Activated naive CD4-positive, alpha-beta T cell treated with anti-CD3 and anti-CD28 coated beads for 36 hours (primary cell): ENCODE measurements at regions of chr2 and their contacts with region 1.

Region 1: GRCh38 chr2:236569573-236569973 is at the start of gene ACKR3:
- DNase-seq: peak; percentile 78
- H3K4me3 Mint-ChIP-seq: peak within 1 kb of the TSS; percentile 63
- H3K27ac Mint-ChIP-seq: no peak within 1 kb of the TSS
- H3K4me1 Mint-ChIP-seq: peaks cover 13% of the 10 kb centered on the region
- H3K27me3 Mint-ChIP-seq: no peaks in the 10 kb centered on the region
- total RNA-seq, gene ACKR3: 0.45 to 0.49 TPM

Region 2: DNA sequence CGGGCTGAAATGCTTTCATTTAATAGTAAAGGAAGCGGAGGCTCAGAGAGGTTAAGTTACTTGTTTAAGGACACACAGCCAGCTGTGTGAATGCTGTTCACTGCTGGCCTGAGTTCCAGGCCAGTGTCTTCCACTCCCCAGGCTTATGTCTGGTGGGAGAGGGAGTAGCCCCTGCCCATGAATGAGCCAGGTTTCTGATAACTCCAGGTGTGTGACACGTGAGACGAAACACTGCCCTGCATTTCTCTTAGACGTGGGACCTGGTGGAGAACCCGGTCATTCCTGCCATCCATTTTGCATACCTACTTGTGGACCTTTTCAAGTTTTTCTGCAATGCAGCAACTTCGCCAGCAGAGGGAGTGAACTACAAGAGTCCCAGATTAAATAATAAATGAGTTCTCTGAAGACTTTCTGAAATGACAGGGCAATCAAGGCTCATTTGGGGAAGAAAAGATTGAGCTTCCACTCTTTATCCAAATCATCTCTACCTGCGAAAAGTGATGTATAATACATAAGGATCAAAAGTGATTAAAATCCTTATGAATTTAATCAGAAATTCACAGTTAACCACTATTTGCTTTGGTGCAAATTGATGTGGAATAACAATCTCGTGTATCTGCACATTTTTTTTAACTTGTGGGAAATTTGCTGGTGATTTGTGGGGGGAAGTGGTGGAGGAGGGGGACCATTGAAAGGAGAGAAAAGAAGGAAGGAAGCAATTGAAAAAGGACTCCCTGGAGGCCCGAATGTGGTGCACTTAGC is 226.0 kb before region 1 on chr2:
- CTCF ChIA-PET with region 1: interaction called, 15 read pairs
- intact Hi-C with region 1: no loop called
- DNase-seq: peak; percentile 70
- H3K4me3 Mint-ChIP-seq: no peak overlapping the region
- H3K27ac Mint-ChIP-seq: no peak overlapping the region
- H3K4me1 Mint-ChIP-seq: no peaks in the 10 kb centered on the region
- H3K27me3 Mint-ChIP-seq: no peaks in the 10 kb centered on the region

Region 3: DNA sequence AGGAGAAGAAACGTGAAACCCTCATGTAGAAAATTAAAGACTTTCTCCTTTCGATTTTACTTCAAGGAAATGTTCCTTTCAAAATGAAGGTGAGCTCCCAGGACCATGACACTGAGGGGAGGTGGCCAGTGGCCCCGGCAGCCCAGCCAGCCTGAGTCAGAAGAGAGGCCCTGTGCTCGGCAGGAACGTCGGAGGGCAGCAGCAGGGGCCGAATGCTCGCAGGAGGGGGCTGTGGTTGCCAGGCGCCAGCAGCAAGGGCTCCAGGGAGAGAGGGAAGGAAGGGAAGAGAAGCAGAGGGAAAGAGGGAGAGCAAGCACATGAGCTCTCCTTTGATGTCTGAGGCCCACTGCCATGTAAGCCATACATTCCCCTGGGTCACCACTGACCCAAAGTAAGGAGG is 73.2 kb before region 1 on chr2:
- CTCF ChIA-PET with region 1: no interaction called
- intact Hi-C with region 1: no loop called
- DNase-seq: no peak
- H3K4me3 Mint-ChIP-seq: no peak overlapping the region
- H3K27ac Mint-ChIP-seq: no peak overlapping the region
- H3K4me1 Mint-ChIP-seq: no peaks in the 10 kb centered on the region
- H3K27me3 Mint-ChIP-seq: peaks cover 5% of the 10 kb centered on the region

Region 4: GRCh38 chr2:236536727-236537398 is 32.7 kb before region 1 on chr2:
- CTCF ChIA-PET with region 1: interaction called, 21 read pairs
- intact Hi-C with region 1: loop called (anchors 1 kb)
- DNase-seq: peak; percentile 69
- H3K4me3 Mint-ChIP-seq: peak overlapping the region; percentile 86
- H3K27ac Mint-ChIP-seq: peak overlapping the region; percentile 91
- H3K4me1 Mint-ChIP-seq: peaks cover 51% of the 10 kb centered on the region
- H3K27me3 Mint-ChIP-seq: no peaks in the 10 kb centered on the region

Region 5: DNA sequence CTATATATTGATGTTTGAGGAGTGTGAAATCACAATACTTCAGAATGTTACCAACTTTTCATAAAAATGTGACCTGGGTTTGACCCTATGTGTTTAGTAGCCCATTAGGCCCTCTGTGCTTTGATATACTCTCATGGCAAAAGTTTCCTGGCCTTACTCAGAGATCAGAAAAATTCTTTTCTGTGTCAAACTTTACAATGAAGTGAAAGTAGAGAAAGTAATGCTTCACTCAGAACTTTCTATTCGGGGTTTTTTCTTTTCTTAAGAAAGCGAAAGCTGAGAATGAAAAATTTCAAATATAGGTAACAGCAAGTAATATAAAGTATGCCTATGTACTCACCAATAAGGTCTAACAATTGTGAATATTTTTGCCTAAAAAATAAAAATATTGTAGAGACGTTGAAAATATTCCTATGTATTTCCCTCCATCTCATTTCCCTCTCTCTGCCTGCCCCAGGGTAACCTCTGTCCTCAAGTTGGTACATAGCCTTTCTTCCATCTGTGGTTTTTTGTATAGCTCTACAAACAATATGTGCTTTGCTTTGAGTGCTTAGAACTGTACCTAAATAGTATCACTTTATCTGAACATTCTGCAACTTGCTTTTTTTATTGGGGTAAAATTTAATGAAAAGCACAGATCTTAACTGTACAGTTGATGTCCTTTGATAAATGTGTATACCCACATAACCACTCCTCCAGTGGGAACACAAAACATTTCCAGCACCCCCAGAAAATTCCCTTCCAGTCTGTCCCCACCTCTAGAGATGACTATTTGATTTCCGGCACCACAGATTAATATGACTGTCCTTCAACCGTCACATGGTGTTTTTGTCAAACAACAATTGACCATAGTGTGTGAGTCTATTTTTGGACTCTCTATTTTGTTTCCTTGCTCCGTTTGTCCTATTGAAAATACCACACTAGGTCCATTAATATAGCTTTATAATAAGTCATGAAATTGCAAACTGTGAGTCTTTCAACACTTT is 10.3 kb before region 1 on chr2:
- CTCF ChIA-PET with region 1: interaction called, 20 read pairs
- intact Hi-C with region 1: loop called (anchors 1 kb)
- DNase-seq: no peak
- H3K4me3 Mint-ChIP-seq: peak overlapping the region; percentile 28
- H3K27ac Mint-ChIP-seq: no peak overlapping the region
- H3K4me1 Mint-ChIP-seq: peaks cover 52% of the 10 kb centered on the region
- H3K27me3 Mint-ChIP-seq: no peaks in the 10 kb centered on the region

Region 6: GRCh38 chr2:237451643-237452469 is 882.3 kb after region 1 on chr2:
- CTCF ChIA-PET with region 1: no interaction called
- intact Hi-C with region 1: no loop called
- DNase-seq: no peak
- H3K4me3 Mint-ChIP-seq: no peak overlapping the region
- H3K27ac Mint-ChIP-seq: no peak overlapping the region
- H3K4me1 Mint-ChIP-seq: peaks cover 9% of the 10 kb centered on the region
- H3K27me3 Mint-ChIP-seq: no peaks in the 10 kb centered on the region